PC-9 (cell line): ENCODE measurements at regions of chr2 and their contacts with region 1.

Region 1: GRCh38 chr2:176096986-176097819 is 2.4 kb upstream of the HOXD12 start:
- DNase-seq: peak; percentile 63 to 79
- H3K4me3 ChIP-seq: peak overlapping the region; percentile 65
- H3K27ac ChIP-seq: no peak overlapping the region
- H3K4me1 ChIP-seq: peaks cover 13% of the 10 kb centered on the region; the same call in 1 of the 2 replicates
- H3K27me3 ChIP-seq: peaks cover 45% of the 10 kb centered on the region
- CTCF ChIP-seq: peak; percentile 98

Region 2: GRCh38 chr2:174697255-174697654 is 1399.9 kb before region 1 on chr2:
- CTCF ChIA-PET with region 1: interaction called, 11 read pairs
- POLR2A ChIA-PET with region 1: no interaction called
- intact Hi-C with region 1: loop called (anchors 1 kb)
- DNase-seq: peak in 1 of 2 experiments; percentile 59
- H3K4me3 ChIP-seq: no peak overlapping the region
- H3K27ac ChIP-seq: no peak overlapping the region
- H3K4me1 ChIP-seq: no peaks in the 10 kb centered on the region
- H3K27me3 ChIP-seq: no peaks in the 10 kb centered on the region
- CTCF ChIP-seq: peak; percentile 84

Region 3: GRCh38 chr2:175251425-175252041 is 845.7 kb before region 1 on chr2:
- CTCF ChIA-PET with region 1: interaction called, 14 read pairs
- POLR2A ChIA-PET with region 1: no interaction called
- intact Hi-C with region 1: loop called (anchors 2 kb)
- DNase-seq: peak; percentile 17 to 47
- H3K4me3 ChIP-seq: no peak overlapping the region
- H3K27ac ChIP-seq: no peak overlapping the region
- H3K4me1 ChIP-seq: no peaks in the 10 kb centered on the region
- H3K27me3 ChIP-seq: peaks cover 12% of the 10 kb centered on the region; the same call in 1 of the 2 replicates
- CTCF ChIP-seq: peak; percentile 89

Region 4: GRCh38 chr2:175414882-175415487 is 682.2 kb before region 1 on chr2:
- CTCF ChIA-PET with region 1: no interaction called
- POLR2A ChIA-PET with region 1: interaction called, 3 read pairs
- intact Hi-C with region 1: loop called (anchors 1 kb)
- DNase-seq: peak in 1 of 2 experiments; percentile 47
- H3K4me3 ChIP-seq: no peak overlapping the region
- H3K27ac ChIP-seq: no peak overlapping the region
- H3K4me1 ChIP-seq: no peaks in the 10 kb centered on the region
- H3K27me3 ChIP-seq: peaks cover 5% of the 10 kb centered on the region; the same call in 1 of the 2 replicates
- CTCF ChIP-seq: peak; percentile 87

Region 5: GRCh38 chr2:176001916-176002687 is 95.1 kb before region 1 on chr2 and contains the start of gene LNPK:
- CTCF ChIA-PET with region 1: no interaction called
- POLR2A ChIA-PET with region 1: no interaction called
- intact Hi-C with region 1: loop called (anchors 1 kb)
- DNase-seq: peak; percentile 90 to 98
- H3K4me3 ChIP-seq: peak within 1 kb of the TSS; percentile 82
- H3K27ac ChIP-seq: peak within 1 kb of the TSS; percentile 37
- H3K4me1 ChIP-seq: peaks cover 16% of the 10 kb centered on the region
- H3K27me3 ChIP-seq: no peaks in the 10 kb centered on the region
- CTCF ChIP-seq: no peak
- total RNA-seq, gene LNPK: 24.8 and 43.8 TPM in 2 replicates

Region 6: GRCh38 chr2:176118601-176119339 is 21.6 kb after region 1 on chr2:
- CTCF ChIA-PET with region 1: no interaction called
- POLR2A ChIA-PET with region 1: no interaction called
- intact Hi-C with region 1: no loop called
- DNase-seq: peak in 1 of 2 experiments; percentile 30
- H3K4me3 ChIP-seq: no peak overlapping the region
- H3K27ac ChIP-seq: no peak overlapping the region
- H3K4me1 ChIP-seq: no peaks in the 10 kb centered on the region
- H3K27me3 ChIP-seq: peaks cover 73% of the 10 kb centered on the region
- CTCF ChIP-seq: peak; percentile 72